Activated naive CD4-positive, alpha-beta T cell treated with anti-CD3 and anti-CD28 coated beads for 36 hours (primary cell): ENCODE measurements at regions of chr1 and their contacts with region 1.

Region 1: DNA sequence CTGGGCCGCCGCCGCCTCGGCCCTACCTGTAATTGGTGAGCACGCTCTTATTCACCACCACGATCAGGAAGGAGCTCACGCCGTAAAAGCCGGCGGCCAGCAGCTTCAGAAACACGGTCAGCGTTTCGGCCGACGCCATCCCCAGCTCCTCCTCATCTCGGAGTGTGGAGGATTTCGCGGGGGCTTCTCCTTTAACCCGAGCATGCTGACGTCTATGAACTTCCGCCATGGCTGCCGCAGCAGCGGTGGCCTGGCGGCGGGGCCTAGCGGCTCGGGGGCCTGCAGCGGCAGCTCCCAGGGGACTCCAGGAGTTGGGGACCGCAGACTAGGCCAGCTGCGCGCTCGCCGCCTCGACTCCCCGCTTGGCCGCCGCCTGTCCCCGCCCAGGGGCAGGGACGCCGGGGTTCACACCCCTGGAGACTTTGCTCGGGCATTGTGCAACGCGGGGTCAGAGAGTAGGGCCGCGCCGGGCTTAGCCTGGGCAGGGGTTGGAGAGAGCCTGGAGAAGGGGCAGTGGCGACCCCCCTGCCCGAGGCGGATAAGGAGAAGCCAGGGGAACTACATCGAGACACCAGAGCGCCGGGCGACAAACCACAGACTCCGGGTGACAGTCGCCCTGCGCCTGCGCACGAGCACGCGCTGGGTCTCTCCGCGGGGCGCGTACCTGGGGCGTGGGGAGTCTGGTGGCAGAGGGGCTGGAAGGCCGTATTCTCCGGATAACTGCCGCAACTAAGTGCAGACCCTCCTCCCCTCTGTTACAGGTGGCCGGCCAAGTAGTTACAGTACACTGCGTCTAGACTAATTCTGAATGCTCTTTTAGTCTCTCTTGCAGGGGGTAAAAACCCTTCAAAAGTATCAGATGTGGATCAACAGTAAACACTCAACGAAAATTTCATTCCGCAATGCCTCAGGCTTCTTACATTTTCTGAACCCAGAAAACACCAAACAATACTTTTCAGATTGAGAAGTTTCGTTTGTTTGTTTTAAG is at the start of gene SLC35D1:
- DNase-seq: peak; percentile 81
- H3K4me3 Mint-ChIP-seq: peak within 1 kb of the TSS; percentile 82
- H3K27ac Mint-ChIP-seq: peak within 1 kb of the TSS; percentile 93
- H3K4me1 Mint-ChIP-seq: peaks cover 19% of the 10 kb centered on the region
- H3K27me3 Mint-ChIP-seq: no peaks in the 10 kb centered on the region
- total RNA-seq, gene SLC35D1: 10.5 to 11.1 TPM

Region 2: DNA sequence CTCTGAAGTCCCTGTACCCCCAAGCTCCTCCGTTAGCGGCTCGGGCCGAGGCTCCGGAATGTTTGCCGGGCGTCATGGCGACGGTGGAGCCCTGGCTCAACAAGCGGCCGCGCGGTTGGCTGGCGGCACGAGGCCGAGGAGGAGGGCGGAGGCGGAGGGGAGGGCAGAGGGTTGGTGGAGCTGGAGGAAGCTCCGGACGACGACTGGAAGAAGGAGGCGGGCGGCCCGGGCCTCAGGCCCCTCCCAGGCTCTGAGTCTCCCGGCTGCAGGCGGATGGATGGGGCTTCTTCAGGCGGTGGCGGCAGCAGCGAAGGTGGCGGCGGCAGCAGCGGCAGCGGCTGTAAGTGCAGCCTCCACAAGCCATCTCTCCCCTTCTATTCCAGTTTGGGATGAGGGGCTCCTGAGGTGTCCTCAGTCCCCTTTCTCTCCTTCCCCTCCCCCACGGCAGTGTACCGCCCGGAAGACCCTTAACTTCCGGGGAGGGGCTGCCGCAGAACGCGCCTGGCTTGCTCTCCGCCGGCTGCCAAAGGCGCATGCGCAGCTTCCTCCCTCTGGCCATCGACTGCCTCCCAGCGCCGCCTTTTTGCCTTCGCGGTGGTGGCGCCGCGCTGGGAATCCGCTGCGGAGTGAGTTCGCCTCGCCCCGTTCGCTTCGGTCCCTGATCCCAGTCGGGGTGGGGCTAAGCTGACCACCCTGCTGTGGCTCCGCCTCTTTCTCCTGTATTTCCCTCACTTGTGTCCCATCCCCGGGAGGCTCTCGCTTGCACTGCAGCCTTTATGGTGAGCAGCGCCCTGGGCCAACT is 129.1 kb before region 1 on chr1 and contains the starts of genes DNAI4 and MIER1:
- CTCF ChIA-PET with region 1: no interaction called
- intact Hi-C with region 1: loop called (anchors 1 kb)
- DNase-seq: peak; percentile 98
- H3K4me3 Mint-ChIP-seq: peak within 1 kb of the TSS; percentile 92
- H3K27ac Mint-ChIP-seq: peak within 1 kb of the TSS; percentile 95
- H3K4me1 Mint-ChIP-seq: peaks cover 50% of the 10 kb centered on the region
- H3K27me3 Mint-ChIP-seq: no peaks in the 10 kb centered on the region
- total RNA-seq, gene DNAI4: 0.83 to 1.5 TPM
- total RNA-seq, gene MIER1: 56.5 to 58.3 TPM

Region 3: GRCh38 chr1:66938613-66939012 is 115.5 kb before region 1 on chr1:
- CTCF ChIA-PET with region 1: no interaction called
- intact Hi-C with region 1: no loop called
- DNase-seq: no peak
- H3K4me3 Mint-ChIP-seq: no peak overlapping the region
- H3K27ac Mint-ChIP-seq: no peak overlapping the region
- H3K4me1 Mint-ChIP-seq: peaks cover 84% of the 10 kb centered on the region
- H3K27me3 Mint-ChIP-seq: no peaks in the 10 kb centered on the region

Region 4: GRCh38 chr1:66996018-66996682 is 57.9 kb before region 1 on chr1:
- CTCF ChIA-PET with region 1: interaction called, 4 read pairs
- intact Hi-C with region 1: loop called (anchors 1 kb)
- DNase-seq: peak; percentile 89
- H3K4me3 Mint-ChIP-seq: no peak overlapping the region
- H3K27ac Mint-ChIP-seq: no peak overlapping the region
- H3K4me1 Mint-ChIP-seq: peaks cover 26% of the 10 kb centered on the region
- H3K27me3 Mint-ChIP-seq: no peaks in the 10 kb centered on the region

Region 5: GRCh38 chr1:67013573-67013972 is 40.5 kb before region 1 on chr1:
- CTCF ChIA-PET with region 1: no interaction called
- intact Hi-C with region 1: loop called (anchors 5 kb)
- DNase-seq: peak; percentile 18
- H3K4me3 Mint-ChIP-seq: no peak overlapping the region
- H3K27ac Mint-ChIP-seq: no peak overlapping the region
- H3K4me1 Mint-ChIP-seq: peaks cover 15% of the 10 kb centered on the region
- H3K27me3 Mint-ChIP-seq: no peaks in the 10 kb centered on the region

Region 6: GRCh38 chr1:67029472-67029871 is 24.6 kb before region 1 on chr1:
- CTCF ChIA-PET with region 1: no interaction called
- intact Hi-C with region 1: loop called (anchors 2 kb)
- DNase-seq: no peak
- H3K4me3 Mint-ChIP-seq: no peak overlapping the region
- H3K27ac Mint-ChIP-seq: no peak overlapping the region
- H3K4me1 Mint-ChIP-seq: peaks cover 3% of the 10 kb centered on the region
- H3K27me3 Mint-ChIP-seq: no peaks in the 10 kb centered on the region

Region 7: DNA sequence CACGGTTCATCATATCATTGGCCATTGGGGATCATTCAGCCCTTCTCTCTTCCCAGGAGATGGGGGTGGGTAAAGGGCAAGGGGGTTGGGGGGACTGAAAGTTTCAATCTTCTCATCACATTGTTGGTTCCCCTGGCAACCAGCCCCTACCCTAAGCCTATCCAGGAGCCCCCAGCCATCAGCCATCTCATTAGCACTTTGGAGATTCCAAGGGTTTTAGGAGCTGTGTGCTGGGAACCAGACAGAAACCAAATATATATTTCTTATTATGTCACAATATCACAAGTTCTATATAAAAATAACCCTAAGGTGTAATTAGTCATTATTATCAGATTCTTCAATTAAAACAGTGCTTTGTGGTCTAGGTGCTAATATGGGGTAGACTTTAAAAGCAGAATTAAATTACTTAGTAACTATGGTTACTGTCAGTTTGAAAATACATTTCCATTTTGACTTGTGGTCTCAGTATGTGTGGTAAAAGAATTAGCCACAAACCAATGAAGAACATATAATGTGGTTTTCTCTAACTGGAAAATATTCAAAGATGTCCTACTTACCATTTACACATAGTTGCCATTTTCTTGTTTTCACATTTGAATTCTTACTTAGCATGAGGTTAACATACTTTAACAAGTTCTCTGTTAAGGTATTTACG is 140.3 kb after region 1 on chr1:
- CTCF ChIA-PET with region 1: no interaction called
- intact Hi-C with region 1: loop called (anchors 5 kb)
- DNase-seq: no peak
- H3K4me3 Mint-ChIP-seq: no peak overlapping the region
- H3K27ac Mint-ChIP-seq: no peak overlapping the region
- H3K4me1 Mint-ChIP-seq: peaks cover 39% of the 10 kb centered on the region
- H3K27me3 Mint-ChIP-seq: no peaks in the 10 kb centered on the region

Region 8: DNA sequence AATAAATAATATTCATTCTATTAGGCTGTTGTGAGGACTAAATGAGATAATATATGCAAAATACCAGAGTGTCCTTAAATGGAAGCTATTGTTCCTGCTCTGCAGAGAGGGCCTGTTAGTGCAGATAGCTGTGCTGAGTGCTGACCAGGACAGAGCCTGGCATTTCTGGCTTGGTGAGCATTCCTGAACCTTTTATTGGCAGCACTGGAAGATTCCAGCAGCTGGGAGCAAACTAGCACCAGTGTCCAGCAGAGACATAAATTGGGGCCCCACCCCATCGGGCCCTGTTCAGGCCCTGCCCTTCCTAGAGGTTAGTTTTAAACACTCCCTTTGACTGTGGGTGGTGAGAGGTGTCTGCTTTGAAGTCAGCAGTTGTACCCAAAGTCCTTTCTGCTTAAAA is 545.0 kb after region 1 on chr1:
- CTCF ChIA-PET with region 1: no interaction called
- intact Hi-C with region 1: no loop called
- DNase-seq: no peak
- H3K4me3 Mint-ChIP-seq: no peak overlapping the region
- H3K27ac Mint-ChIP-seq: no peak overlapping the region
- H3K4me1 Mint-ChIP-seq: no peaks in the 10 kb centered on the region
- H3K27me3 Mint-ChIP-seq: peaks cover 2% of the 10 kb centered on the region